Mammary epithelial cell (primary cell): ENCODE measurements at regions of chrX and their contacts with region 1.

Region 1: DNA sequence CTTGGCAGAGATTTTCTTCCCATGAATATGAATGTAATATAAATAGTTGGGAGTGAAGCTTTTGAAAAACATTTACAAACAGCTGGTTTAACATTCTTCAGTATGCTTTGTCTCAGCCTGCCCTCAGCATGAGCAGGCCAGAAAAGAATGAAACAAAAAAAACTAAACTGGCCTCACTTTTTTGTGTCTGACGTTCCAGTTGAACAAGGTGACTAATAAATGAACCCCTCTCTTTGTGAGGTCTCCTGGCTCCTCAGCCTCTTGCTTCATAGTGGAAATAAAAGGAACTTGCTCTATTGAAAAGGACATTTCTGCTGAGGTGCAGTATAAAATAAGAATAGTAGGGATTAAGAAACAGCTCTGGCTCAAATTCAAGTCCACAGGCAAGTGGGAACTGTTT is 9.4 kb downstream of the CHST7 start:
- DNase-seq: peak; percentile 88
- H3K4me3 ChIP-seq: peak overlapping the region in 1 of 3 experiments; percentile 19
- H3K27ac ChIP-seq: peak overlapping the region; percentile 85
- H3K4me1 ChIP-seq: peaks cover 26% of the 10 kb centered on the region
- H3K27me3 ChIP-seq: no peaks in the 10 kb centered on the region
- CTCF ChIP-seq: no peak

Region 2: DNA sequence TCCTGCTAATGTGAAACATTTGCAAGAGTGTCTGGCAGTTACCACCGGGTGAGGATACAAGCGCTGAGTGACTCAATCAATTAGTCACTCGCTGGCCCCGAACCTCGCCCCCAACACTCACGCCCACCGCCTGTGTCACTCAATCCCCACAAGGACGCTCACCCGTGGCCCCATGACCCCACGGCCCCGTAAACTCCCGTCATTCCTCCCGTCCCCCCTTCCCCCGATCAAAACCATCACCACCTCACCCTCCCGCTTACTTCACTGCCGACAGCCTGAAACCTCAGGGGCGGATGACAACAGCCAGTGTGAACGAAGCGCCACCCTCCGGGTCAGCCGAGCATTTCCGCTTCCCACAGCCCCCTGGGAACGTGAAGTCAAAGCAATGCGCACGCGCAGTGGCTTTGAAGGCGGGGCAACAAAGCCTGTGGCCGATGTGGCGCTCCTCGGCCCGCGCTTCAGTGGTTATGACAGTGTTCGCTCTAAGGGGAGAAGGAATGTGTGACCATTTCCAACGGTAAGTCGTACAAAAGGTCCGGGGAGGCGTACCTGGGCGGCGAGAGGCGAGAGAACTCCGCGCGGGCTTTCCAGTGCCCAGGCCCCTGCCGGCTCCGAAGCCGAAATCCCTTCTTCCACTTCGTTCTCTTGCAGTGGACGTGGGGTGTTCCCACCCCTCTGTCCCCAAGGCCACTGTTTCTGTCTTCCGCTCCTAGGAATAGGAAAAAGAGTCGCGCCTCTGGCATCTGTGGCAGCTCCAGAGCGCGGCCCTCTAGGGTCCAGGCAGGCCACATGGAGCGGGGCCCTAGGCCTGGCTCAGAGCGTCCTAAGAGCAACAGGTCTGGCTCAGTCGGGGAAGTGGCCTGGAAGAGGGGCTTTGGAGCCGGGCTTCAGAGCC is 37.6 kb before region 1 on chrX and contains the start of gene ZNF674:
- CTCF ChIA-PET with region 1: no interaction called
- dilution Hi-C with region 1: no loop called
- in situ Hi-C with region 1: no loop called
- intact Hi-C with region 1: loop called (anchors 5 kb)
- DNase-seq: peak; percentile 84
- H3K4me3 ChIP-seq: peak within 1 kb of the TSS; percentile 53 to 78 (median 64)
- H3K27ac ChIP-seq: peak within 1 kb of the TSS; percentile 84
- H3K4me1 ChIP-seq: peaks cover 19% of the 10 kb centered on the region
- H3K27me3 ChIP-seq: peaks cover 1% of the 10 kb centered on the region
- CTCF ChIP-seq: peak; percentile 23 to 50
- total RNA-seq, gene ZNF674: 6.0 to 7.4 TPM